AG04449 (cell line): ENCODE measurements at regions of chr1 and their contacts with region 1.

Region 1: DNA sequence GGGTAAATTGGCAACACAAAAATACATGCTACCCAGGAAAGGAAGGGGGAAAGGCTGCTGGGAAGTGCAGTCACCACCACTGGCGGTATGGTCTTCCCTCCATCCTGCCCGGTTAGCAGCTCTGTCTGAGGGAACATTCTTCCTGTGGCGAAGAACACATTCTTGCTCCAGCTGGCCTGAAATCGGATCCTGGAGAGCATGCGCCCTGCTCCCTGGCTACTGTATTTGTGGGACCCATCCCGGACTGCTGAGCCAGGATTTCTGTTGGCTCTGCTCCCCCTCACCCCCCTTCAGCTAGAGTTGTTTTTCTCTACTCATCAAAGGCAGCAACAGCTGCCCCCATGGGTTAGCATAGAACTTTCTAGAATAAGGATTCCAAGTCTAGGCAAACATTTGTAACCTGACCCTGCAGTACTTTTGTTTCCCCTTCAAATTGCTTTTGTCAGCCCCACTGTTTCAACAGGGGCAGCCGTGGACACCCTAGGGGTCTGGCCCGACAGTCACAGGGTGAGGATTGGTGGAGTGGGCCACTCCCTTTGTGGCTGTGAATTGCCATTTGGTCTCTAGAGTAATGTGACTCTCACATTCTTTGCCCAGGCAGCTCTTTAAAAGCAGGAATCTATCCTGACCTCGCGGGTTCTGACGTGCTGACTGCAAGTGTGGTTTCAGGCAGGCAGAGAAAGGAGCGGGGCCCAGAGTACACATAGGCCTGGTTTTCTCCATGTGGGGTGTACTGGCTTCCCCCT is 157.7 kb downstream of the TOMM20 start:
- DNase-seq: peak; percentile 97
- H3K4me3 ChIP-seq: no peak overlapping the region
- CTCF ChIP-seq: no peak

Region 2: DNA sequence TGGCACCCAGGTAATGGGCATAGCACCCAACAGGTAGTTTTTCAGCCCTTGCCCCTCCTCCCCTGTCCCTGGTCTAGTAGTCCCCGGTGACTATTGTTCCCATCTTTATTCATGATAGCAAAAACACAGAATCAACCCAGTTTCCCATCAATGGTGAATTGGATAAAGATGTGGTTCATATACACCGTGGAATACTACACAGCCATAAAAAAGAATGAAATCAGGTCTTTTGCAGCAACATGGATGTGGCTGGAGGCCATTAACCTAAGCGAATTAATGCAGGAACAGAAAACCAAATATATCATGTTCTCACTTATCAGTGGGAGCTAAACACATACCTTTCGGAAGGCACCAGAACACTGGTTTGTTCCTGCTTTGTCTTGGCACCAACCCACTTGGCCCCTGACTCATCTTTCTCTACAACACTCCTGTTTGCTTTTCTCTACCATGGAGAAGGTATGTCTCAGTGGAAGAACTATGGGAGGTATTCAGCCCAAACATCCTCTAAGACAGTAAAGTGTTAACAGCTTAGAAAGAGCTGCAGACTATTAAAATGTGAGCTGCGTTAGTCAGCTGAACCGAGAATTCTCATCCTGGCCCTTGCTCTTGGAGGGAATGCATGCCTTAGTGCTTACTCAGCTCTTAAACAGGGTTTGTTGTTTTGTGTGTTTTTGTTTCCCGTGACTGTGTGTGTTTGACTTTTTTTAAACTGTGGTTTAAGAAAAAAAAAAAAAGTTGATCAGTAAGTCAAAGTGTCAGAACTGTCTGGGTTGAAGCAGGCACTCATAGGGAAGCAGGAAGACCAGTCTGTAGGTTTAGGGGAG is 45.3 kb before region 1 on chr1:
- CTCF ChIA-PET with region 1: no interaction called
- POLR2A ChIA-PET with region 1: interaction called, 12 read pairs
- DNase-seq: peak; percentile 99
- H3K4me3 ChIP-seq: no peak overlapping the region
- CTCF ChIP-seq: no peak

Region 3: GRCh38 chr1:235181561-235182245 is 210.8 kb after region 1 on chr1:
- CTCF ChIA-PET with region 1: no interaction called
- POLR2A ChIA-PET with region 1: no interaction called
- DNase-seq: no peak
- H3K4me3 ChIP-seq: no peak overlapping the region
- CTCF ChIP-seq: no peak